ENCODE measurements at regions of chr17 and their contacts with region 1.

Region 1: GRCh38 chr17:19648475-19649406 is at the start of gene ALDH3A2:
- DNase-seq: peak; percentile 97 to 98
- ATAC-seq: peak; percentile 99 to 100 (median 100)
- H3K4me3 ChIP-seq: peak within 1 kb of the TSS; percentile 49 to 99 (median 90)
- H3K27ac ChIP-seq: peak within 1 kb of the TSS; percentile 89 to 97 (median 95)
- H3K4me1 ChIP-seq: peaks cover 9 to 69% (median 46%) of the 10 kb centered on the region in 9 donors
- H3K27me3 ChIP-seq: no peaks in the 10 kb centered on the region
- CTCF ChIP-seq: peak in 5 of 9 donors; percentile 11 to 47 (median 40)
- total RNA-seq, gene ALDH3A2: 50.2 to 104 (median 73.6) TPM

Region 2: DNA sequence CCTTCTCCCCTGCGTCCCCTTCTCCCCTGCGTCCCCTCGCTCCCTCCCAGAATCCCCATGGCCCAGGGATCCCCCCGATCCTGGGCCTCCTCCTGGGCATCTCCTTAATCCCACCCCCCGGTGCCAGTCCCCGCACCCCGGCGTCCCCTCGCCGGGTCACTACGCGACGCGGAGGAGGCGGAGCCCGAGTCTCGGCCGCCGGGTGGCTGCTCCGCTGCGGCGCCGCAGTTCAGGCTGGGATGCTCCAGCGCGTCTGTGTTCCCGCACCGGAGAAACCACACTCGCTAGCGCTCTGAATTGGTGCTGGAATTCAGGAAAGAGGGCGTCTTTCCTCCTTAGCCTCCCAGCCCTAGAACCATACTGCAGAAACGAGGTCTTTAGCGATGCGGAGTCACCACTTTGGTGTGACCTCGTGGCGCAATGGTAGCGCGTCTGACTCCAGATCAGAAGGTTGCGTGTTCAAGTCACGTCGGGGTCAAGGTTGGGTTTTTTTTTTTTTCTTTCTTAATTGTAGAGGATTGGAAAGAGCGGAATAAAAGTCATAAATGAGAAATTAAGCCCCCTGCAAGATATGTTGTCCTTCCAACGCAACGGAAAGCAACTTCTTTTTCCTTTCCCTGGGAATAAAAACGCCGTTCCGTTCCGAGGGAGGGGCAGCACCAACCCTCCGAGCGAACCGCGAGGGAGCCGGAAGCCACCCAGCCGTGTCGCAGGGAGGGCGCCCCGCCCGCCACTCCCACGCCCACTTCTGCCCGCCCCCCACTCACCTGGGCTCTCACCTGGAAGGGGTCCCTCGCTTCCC is 140.8 kb before region 1 on chr17:
- intact Hi-C with region 1: loop called in 8 of 10 experiments (anchors 5 to 10 kb)
- DNase-seq: peak; percentile 80 to 93
- ATAC-seq: peak; percentile 84 to 95 (median 92)
- H3K4me3 ChIP-seq: peak overlapping the region; percentile 30 to 77 (median 66)
- H3K27ac ChIP-seq: peak overlapping the region; percentile 13 to 87 (median 78)
- H3K4me1 ChIP-seq: peaks cover 0 to 9% (median 5%) of the 10 kb centered on the region in 9 donors
- H3K27me3 ChIP-seq: no peaks in the 10 kb centered on the region
- CTCF ChIP-seq: no peak

Region 3: GRCh38 chr17:19513897-19514488 is 134.7 kb before region 1 on chr17:
- intact Hi-C with region 1: loop called in 9 of 10 experiments (anchors 5 to 10 kb)
- DNase-seq: peak; percentile 52 to 68
- ATAC-seq: peak; percentile 24 to 87 (median 80)
- H3K4me3 ChIP-seq: peak overlapping the region in 4 of 10 donors; percentile 14 to 33 (median 17)
- H3K27ac ChIP-seq: peak overlapping the region in 9 of 10 donors; percentile 13 to 78 (median 53)
- H3K4me1 ChIP-seq: peaks cover 0 to 17% (median 6%) of the 10 kb centered on the region in 9 donors
- H3K27me3 ChIP-seq: no peaks in the 10 kb centered on the region
- CTCF ChIP-seq: peak; percentile 80 to 97 (median 93)

Region 4: DNA sequence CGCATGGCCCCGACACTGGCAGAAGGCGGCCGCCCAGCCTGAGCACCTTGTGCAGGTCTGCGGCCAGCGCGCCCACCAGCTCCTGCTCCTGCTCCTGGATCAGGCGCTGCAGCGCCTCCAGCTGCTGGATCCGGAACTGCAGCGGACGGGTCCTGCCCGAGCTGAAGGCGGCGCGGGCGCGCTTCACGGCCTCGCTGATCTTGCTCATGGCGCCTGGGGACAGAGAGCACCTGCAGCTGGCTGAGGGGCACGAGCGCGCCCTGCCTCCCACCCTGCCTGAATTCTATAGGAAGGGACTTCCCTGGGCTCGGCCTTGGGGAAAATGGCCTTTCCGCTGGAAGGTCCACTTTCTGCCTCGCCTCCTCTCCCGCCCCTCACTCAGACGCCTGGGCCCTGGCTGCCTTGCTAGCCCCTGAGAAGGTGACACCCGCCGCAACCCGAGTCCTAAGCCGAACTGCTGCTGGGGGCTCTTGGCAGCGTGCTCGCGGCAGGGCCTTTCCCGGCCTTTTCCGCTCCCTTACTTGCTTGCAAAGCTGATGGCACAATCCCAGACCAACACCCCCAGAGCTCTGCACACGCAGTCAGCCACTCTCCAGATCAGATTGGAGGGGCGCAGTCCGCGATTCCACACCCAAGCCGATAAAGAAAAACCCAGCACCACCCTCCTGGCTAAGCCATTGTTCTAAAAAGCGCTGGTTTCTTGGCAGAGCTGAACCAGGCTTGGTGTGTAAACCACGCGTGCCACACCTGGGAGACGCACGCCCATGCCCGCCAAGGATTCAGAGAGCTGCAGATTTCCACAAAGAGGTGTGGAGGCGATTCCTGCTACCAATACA is 96.4 kb after region 1 on chr17:
- intact Hi-C with region 1: loop called in 4 of 10 experiments (anchors 5 to 10 kb)
- DNase-seq: peak; percentile 90 to 93
- ATAC-seq: peak; percentile 80 to 95 (median 90)
- H3K4me3 ChIP-seq: peak overlapping the region; percentile 38 to 63 (median 58)
- H3K27ac ChIP-seq: peak overlapping the region in 7 of 10 donors; percentile 11 to 54 (median 36)
- H3K4me1 ChIP-seq: peaks cover 0 to 13% (median 9%) of the 10 kb centered on the region in 9 donors
- H3K27me3 ChIP-seq: no peaks in the 10 kb centered on the region
- CTCF ChIP-seq: peak; percentile 79 to 98 (median 94)

Region 5: DNA sequence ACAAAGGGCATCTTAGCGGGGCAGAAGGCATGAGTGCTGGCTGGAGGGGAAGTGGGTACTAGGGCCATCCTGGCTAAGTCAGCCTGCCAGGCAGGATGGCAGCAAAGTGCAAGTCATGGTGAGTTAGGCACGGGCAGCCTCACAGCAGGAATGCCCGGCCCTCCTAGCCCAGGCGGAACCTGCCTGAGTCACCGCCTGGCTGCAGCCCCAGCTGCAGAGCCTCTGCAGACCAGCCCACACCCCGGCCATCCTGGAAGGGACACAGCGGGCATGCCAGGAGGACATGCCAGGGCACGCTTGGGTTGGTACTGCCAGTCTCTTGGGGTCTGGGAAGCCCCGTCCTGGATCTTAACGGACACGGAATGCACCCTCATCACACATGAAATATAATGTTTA is 104.3 kb after region 1 on chr17:
- intact Hi-C with region 1: loop called in 4 of 10 experiments (anchors 5 to 10 kb)
- DNase-seq: peak; percentile 64 to 67
- ATAC-seq: peak; percentile 86 to 99 (median 96)
- H3K4me3 ChIP-seq: no peak overlapping the region
- H3K27ac ChIP-seq: peak overlapping the region; percentile 20 to 85 (median 71)
- H3K4me1 ChIP-seq: peaks cover 0 to 15% (median 6%) of the 10 kb centered on the region in 9 donors
- H3K27me3 ChIP-seq: peaks cover 0 to under 1% (median 0%) of the 10 kb centered on the region in 7 donors
- CTCF ChIP-seq: no peak

Region 6: GRCh38 chr17:19766422-19767270 is 117.9 kb after region 1 on chr17:
- intact Hi-C with region 1: loop called in 2 of 10 experiments (anchors 10 kb)
- DNase-seq: peak; percentile 77 to 84
- ATAC-seq: peak; percentile 89 to 95 (median 90)
- H3K4me3 ChIP-seq: no peak overlapping the region
- H3K27ac ChIP-seq: peak overlapping the region in 1 of 10 donors; percentile 3
- H3K4me1 ChIP-seq: peaks cover 0 to 11% (median 0%) of the 10 kb centered on the region in 9 donors
- H3K27me3 ChIP-seq: no peaks in the 10 kb centered on the region
- CTCF ChIP-seq: peak; percentile 80 to 99 (median 98)

Region 7: GRCh38 chr17:19805006-19805405 is 156.3 kb after region 1 on chr17:
- intact Hi-C with region 1: no loop called
- DNase-seq: no peak
- ATAC-seq: no peak
- H3K4me3 ChIP-seq: no peak overlapping the region
- H3K27ac ChIP-seq: no peak overlapping the region
- H3K4me1 ChIP-seq: no peaks in the 10 kb centered on the region
- H3K27me3 ChIP-seq: no peaks in the 10 kb centered on the region
- CTCF ChIP-seq: no peak